ENCODE measurements at regions of chr18 and their contacts with region 1.

Region 1: DNA sequence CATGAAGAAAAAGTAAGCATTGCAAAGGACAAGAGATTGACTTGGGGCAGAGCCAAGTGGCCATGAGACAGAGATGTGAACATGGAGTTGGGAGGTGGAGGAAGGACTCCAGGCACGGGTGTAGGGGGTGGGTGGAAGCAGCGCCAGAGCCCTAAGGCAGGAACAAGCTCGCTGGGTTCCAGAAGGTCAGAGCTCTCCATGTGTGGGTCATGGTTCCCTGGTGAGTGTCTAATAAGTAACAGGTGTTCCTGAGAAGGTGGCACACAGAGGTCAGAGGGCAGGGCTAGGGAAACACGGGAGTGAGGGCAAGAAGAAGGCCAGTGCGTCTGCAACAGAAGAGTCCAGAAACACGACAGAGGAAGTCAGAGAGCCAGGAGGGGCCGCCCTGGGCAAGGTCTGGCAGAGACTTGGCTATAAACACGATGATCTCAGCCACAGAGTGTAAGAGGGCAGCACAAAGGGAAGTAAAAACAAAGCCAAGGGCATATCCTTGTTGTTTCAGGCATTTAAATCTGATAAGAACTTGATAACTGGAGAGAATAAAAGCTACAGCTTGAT is 260.8 kb downstream of the TGIF1 start:
- DNase-seq: peak in 1 of 2 donors; percentile 35
- ATAC-seq: peak; percentile 47 to 81 (median 76)
- H3K4me3 ChIP-seq: no peak overlapping the region
- H3K27ac ChIP-seq: peak overlapping the region in 1 of 10 donors; percentile 47
- H3K4me1 ChIP-seq: peaks cover 0 to 18% (median 0%) of the 10 kb centered on the region in 9 donors
- H3K27me3 ChIP-seq: peaks cover 0 to 3% (median 0%) of the 10 kb centered on the region in 7 donors
- CTCF ChIP-seq: no peak

Region 2: DNA sequence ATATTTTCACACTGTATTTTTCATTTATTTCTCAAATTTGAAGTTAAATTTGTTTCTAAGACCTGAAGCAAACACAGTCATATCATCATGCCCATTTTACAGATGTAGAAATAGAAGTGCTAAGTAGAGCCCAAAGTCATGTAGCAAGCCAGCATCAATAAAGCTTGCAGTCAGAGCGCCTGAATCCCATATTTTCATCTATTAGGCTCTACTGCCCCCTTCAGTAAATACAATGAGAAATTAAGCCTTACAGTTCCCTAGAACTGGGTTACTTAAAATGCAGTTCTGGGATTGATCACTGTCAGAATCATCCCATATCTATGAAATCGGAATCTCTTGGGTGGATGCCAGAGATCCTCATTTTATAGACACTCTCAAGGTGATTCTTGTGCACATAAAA is 159.1 kb after region 1 on chr18:
- intact Hi-C with region 1: loop called in 4 of 10 experiments (anchors 10 kb)
- DNase-seq: no peak
- ATAC-seq: peak in 5 of 8 donors; percentile 33 to 79 (median 61)
- H3K4me3 ChIP-seq: no peak overlapping the region
- H3K27ac ChIP-seq: no peak overlapping the region
- H3K4me1 ChIP-seq: peaks cover 0 to 26% (median 4%) of the 10 kb centered on the region in 9 donors
- H3K27me3 ChIP-seq: no peaks in the 10 kb centered on the region
- CTCF ChIP-seq: peak; percentile 11 to 64 (median 49)

Measured in heart right ventricle (tissue), 16 donors.